Astrocyte of the cerebellum (primary cell): ENCODE measurements at regions of chr11 and their contacts with region 1.

Region 1: DNA sequence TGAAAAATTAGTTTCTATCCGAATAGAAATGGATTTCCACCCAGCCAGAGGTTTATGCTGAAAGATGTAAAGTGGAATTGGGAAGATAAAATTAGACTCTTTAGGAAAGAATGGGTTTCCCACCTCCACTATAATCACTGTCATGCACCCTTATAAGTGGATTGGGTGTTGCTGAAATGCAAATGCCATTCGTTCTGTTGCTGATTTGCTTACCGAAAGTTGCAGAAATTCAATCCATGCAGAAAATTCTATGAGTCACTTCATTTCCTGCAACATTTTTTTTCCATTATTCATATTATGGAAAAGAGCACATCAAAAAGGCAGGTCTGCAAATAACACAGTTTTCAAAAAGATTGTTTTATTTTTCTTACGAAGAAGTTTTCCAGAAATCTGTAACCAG is 65.6 kb downstream of the LDLRAD3 start:
- DNase-seq: peak; percentile 44
- H3K4me3 ChIP-seq: no peak overlapping the region
- CTCF ChIP-seq: no peak

Region 2: GRCh38 chr11:35944756-35945518 is 64.5 kb before region 1 on chr11:
- in situ Hi-C with region 1: loop called (anchors 5 kb)
- DNase-seq: no peak
- H3K4me3 ChIP-seq: peak overlapping the region; percentile 60
- CTCF ChIP-seq: no peak